Heart left ventricle (tissue), 16 donors: ENCODE measurements at regions of chr7 and their contacts with region 1.

Region 1: GRCh38 chr7:112789817-112790585 is at the start of gene TMEM168:
- DNase-seq: peak; percentile 83 to 93 (median 86)
- ATAC-seq: peak; percentile 67 to 94 (median 93)
- H3K4me3 ChIP-seq: peak within 1 kb of the TSS; percentile 73 to 95 (median 83)
- H3K27ac ChIP-seq: peak within 1 kb of the TSS; percentile 69 to 96 (median 89)
- H3K4me1 ChIP-seq: peaks cover 0 to 21% (median 13%) of the 10 kb centered on the region in 12 donors
- H3K27me3 ChIP-seq: no peaks in the 10 kb centered on the region
- CTCF ChIP-seq: peak in 4 of 12 donors; percentile 11 to 24 (median 16)
- POLR2A ChIP-seq: peak in 1 of 2 donors; percentile 34
- total RNA-seq, gene TMEM168: 15.6 to 23.3 (median 18.1) TPM

Region 2: GRCh38 chr7:112476390-112477052 is 313.5 kb before region 1 on chr7:
- intact Hi-C with region 1: no loop called
- DNase-seq: peak in 1 of 5 donors; percentile 14
- ATAC-seq: no peak
- H3K4me3 ChIP-seq: no peak overlapping the region
- H3K27ac ChIP-seq: no peak overlapping the region
- H3K4me1 ChIP-seq: peaks cover 0 to 11% (median 3%) of the 10 kb centered on the region in 12 donors
- H3K27me3 ChIP-seq: no peaks in the 10 kb centered on the region
- CTCF ChIP-seq: no peak
- POLR2A ChIP-seq: no peak

Region 3: DNA sequence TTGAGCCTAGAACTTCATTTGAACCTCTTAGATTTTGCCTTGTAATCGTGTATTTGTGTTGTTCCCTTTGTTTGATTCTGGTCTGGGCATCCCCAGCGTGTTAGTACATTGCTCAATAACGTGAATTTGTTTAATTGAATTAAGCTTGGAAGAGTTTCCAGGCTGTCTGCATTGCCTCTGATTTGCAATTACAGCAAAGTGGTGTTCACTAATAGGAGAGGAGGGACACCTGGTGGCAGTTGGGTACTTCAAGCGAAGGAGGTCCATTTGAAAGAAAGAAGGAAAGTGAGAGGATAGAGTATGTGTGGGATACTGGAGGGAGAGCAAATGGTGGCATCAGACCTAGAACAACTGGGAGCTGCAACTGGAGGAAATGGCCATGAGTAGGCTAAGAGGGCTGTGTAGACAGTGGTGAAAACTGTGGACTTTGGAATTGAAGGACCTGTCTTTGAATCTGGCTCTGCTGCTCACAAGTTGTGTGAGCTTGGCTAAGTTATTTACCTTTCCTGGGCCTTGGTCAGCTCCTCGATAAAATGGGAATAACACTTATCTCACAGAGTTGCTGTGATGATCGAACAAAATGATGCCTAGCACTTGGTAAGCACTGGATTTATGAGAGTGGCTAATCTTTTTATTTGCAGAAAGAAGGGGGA is 294.1 kb before region 1 on chr7:
- intact Hi-C with region 1: no loop called
- DNase-seq: peak in 2 of 5 donors; percentile 46 to 55
- ATAC-seq: peak; percentile 52 to 90 (median 89)
- H3K4me3 ChIP-seq: no peak overlapping the region
- H3K27ac ChIP-seq: peak overlapping the region in 1 of 12 donors; percentile 30
- H3K4me1 ChIP-seq: no peaks in the 10 kb centered on the region
- H3K27me3 ChIP-seq: no peaks in the 10 kb centered on the region
- CTCF ChIP-seq: peak; percentile 35 to 70 (median 62)
- POLR2A ChIP-seq: no peak

Region 4: GRCh38 chr7:112630565-112630964 is 159.4 kb before region 1 on chr7:
- intact Hi-C with region 1: no loop called
- DNase-seq: no peak
- ATAC-seq: no peak
- H3K4me3 ChIP-seq: no peak overlapping the region
- H3K27ac ChIP-seq: no peak overlapping the region
- H3K4me1 ChIP-seq: no peaks in the 10 kb centered on the region
- H3K27me3 ChIP-seq: no peaks in the 10 kb centered on the region
- CTCF ChIP-seq: no peak
- POLR2A ChIP-seq: no peak

Region 5: DNA sequence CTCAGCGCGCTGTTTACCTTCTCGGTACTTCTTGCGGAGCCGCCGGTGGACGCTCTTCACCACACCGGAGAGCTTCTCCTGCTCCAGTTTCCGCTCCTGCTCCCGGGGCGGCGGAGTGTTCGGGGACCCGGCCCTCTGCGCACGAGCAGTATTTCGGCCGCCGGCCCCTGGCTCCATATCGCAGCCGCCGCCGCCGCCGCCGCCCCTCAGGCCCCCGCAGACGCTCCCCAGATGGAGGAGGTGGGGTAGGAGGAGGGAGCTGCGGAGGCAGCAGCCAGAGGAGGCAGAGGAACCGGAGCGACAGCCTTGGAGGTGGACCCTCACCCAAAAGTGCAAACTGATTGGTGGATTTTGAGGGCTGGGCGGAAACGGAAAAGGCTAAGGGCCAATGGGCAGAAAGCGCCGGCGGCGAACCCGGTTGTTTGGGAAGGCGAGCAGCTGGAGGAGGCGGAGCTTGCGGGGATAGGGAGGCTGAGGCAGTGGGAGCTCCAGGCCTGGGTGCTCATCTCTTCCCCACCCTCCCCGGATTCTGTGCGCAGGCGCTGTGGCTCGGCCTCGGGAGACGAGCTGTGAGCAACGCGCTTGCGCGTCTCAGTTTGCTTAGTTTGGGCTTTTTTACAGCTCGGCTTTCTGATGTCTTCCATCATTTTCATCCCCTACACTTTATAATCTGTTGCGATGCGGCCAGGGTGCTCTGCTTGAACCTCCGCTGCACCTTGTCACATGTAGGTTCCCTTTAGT is 149.7 kb after region 1 on chr7:
- intact Hi-C with region 1: loop called in 3 of 10 experiments (anchors 10 kb)
- DNase-seq: peak; percentile 99 to 100 (median 99)
- ATAC-seq: peak; percentile 98 to 99 (median 99)
- H3K4me3 ChIP-seq: peak overlapping the region; percentile 64 to 92 (median 82)
- H3K27ac ChIP-seq: peak overlapping the region; percentile 47 to 90 (median 85)
- H3K4me1 ChIP-seq: peaks cover 5 to 41% (median 24%) of the 10 kb centered on the region in 12 donors
- H3K27me3 ChIP-seq: no peaks in the 10 kb centered on the region
- CTCF ChIP-seq: peak in 1 of 12 donors; percentile 9
- POLR2A ChIP-seq: peak in 1 of 2 donors; percentile 79

Region 6: GRCh38 chr7:112965513-112965912 is 175.5 kb after region 1 on chr7:
- intact Hi-C with region 1: no loop called
- DNase-seq: no peak
- ATAC-seq: no peak
- H3K4me3 ChIP-seq: no peak overlapping the region
- H3K27ac ChIP-seq: peak overlapping the region in 2 of 12 donors; percentile 6 to 27
- H3K4me1 ChIP-seq: peaks cover 0 to 26% (median 0%) of the 10 kb centered on the region in 12 donors
- H3K27me3 ChIP-seq: no peaks in the 10 kb centered on the region
- CTCF ChIP-seq: no peak
- POLR2A ChIP-seq: no peak